IMR-90 (cell line): ENCODE measurements at regions of chr14 and their contacts with region 1.

Region 1: DNA sequence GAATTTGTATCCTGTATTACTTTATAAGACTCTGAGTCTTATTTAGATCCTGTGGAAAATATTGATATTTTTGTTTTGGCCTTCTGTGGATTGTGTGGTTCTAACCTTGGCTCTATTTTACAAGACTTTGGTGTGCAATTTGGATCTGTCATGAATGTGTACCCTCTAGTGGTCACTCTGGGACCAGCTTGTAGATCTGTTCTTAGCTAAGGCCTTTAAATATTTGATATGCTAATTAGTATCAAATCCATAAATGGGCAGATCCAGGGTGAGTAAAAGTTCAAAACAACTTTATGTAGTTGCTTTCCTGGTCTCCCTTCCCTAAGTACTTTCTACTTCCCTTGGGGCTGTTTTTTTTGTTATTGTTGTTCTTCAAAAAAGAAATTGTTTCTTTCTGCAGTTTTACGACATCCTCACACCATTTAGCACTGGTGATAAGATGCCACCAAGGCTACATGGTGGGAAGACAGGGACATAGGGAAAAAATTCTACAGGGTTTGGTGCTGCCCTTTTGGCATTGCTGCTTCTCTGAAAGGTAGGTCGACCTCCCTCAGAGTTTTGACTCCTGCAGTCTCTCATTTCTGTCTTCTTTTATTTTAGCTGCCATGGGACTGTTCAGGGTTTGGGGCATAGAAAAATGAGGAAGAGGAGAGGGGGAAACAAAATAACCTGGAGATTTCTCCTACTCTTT is 238.5 kb downstream of the GPHN start:
- DNase-seq: peak; percentile 58
- ATAC-seq: peak; percentile 63
- H3K4me3 ChIP-seq: no peak overlapping the region
- H3K27ac ChIP-seq: no peak overlapping the region
- H3K4me1 ChIP-seq: no peaks in the 10 kb centered on the region
- H3K27me3 ChIP-seq: no peaks in the 10 kb centered on the region
- CTCF ChIP-seq: peak; percentile 52
- POLR2A ChIP-seq: no peak
- RAD21 ChIP-seq: peak; percentile 40

Region 2: DNA sequence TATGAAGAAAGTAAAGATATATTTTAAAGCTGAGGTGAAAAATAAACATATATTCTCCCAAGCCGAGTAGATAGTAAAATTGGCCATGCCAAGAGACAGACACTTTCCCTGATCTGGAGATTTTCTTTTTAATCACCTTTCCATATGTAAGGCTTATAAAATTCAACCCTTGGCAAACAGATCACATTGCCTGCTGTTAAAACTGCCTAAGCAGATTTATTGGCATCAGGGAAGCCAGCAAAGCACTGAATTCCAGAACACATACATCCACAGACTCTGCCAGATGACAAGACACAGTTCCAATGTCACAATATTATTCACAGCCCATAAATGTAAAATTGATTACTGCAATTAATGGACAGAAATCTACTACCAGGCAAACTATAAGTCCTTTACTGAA is 364.6 kb after region 1 on chr14:
- CTCF ChIA-PET with region 1: no interaction called
- POLR2A ChIA-PET with region 1: no interaction called
- dilution Hi-C with region 1: no loop called
- in situ Hi-C with region 1: no loop called
- intact Hi-C with region 1: loop called (anchors 5 kb)
- DNase-seq: no peak
- ATAC-seq: no peak
- H3K4me3 ChIP-seq: no peak overlapping the region
- H3K27ac ChIP-seq: no peak overlapping the region
- H3K4me1 ChIP-seq: no peaks in the 10 kb centered on the region
- H3K27me3 ChIP-seq: no peaks in the 10 kb centered on the region
- CTCF ChIP-seq: no peak
- POLR2A ChIP-seq: no peak
- RAD21 ChIP-seq: no peak